Right cardiac atrium (tissue), 5 donors: ENCODE measurements at regions of chr2 and their contacts with region 1.

Region 1: GRCh38 chr2:206800506-206801417 is 35.4 kb downstream of the FASTKD2 start:
- DNase-seq: peak; percentile 57 to 74 (median 57)
- ATAC-seq: peak; percentile 78 to 79
- H3K4me3 ChIP-seq: peak overlapping the region; percentile 15
- H3K27ac ChIP-seq: no peak overlapping the region
- H3K4me1 ChIP-seq: peaks cover 1% of the 10 kb centered on the region
- H3K27me3 ChIP-seq: no peaks in the 10 kb centered on the region

Region 2: GRCh38 chr2:206937555-206937954 is 136.8 kb after region 1 on chr2:
- intact Hi-C with region 1: no loop called
- DNase-seq: no peak
- ATAC-seq: no peak
- H3K4me3 ChIP-seq: no peak overlapping the region
- H3K27ac ChIP-seq: no peak overlapping the region
- H3K4me1 ChIP-seq: no peaks in the 10 kb centered on the region
- H3K27me3 ChIP-seq: no peaks in the 10 kb centered on the region

Region 3: DNA sequence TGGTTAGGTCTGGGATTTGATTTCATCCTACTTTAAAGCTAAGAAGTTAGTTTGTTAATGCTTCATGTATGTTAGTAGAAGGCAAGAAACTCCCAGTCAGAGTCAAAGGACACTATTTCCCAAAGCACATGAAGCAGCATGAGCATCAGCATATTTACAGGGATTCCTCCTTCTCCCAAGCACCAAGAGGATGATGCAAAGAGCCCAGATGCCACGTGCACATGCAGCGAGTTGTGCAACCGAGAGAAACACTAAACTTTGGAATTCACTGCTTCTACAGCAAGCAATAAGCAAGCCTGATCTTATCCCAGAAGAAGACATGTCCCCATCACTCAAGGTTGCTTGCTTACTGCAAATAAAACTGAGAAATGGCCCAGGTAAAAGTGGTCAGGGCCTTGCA is 171.0 kb after region 1 on chr2:
- intact Hi-C with region 1: loop called in 2 of 4 experiments (anchors 10 kb)
- DNase-seq: peak in 1 of 3 donors; percentile 19
- ATAC-seq: no peak
- H3K4me3 ChIP-seq: no peak overlapping the region
- H3K27ac ChIP-seq: no peak overlapping the region
- H3K4me1 ChIP-seq: no peaks in the 10 kb centered on the region
- H3K27me3 ChIP-seq: no peaks in the 10 kb centered on the region

Region 4: GRCh38 chr2:206989306-206989705 is 188.5 kb after region 1 on chr2:
- intact Hi-C with region 1: loop called in 2 of 4 experiments (anchors 5 kb)
- DNase-seq: peak; percentile 28 to 67 (median 47)
- ATAC-seq: peak; percentile 76 to 84
- H3K4me3 ChIP-seq: no peak overlapping the region
- H3K27ac ChIP-seq: no peak overlapping the region
- H3K4me1 ChIP-seq: no peaks in the 10 kb centered on the region
- H3K27me3 ChIP-seq: no peaks in the 10 kb centered on the region

Region 5: DNA sequence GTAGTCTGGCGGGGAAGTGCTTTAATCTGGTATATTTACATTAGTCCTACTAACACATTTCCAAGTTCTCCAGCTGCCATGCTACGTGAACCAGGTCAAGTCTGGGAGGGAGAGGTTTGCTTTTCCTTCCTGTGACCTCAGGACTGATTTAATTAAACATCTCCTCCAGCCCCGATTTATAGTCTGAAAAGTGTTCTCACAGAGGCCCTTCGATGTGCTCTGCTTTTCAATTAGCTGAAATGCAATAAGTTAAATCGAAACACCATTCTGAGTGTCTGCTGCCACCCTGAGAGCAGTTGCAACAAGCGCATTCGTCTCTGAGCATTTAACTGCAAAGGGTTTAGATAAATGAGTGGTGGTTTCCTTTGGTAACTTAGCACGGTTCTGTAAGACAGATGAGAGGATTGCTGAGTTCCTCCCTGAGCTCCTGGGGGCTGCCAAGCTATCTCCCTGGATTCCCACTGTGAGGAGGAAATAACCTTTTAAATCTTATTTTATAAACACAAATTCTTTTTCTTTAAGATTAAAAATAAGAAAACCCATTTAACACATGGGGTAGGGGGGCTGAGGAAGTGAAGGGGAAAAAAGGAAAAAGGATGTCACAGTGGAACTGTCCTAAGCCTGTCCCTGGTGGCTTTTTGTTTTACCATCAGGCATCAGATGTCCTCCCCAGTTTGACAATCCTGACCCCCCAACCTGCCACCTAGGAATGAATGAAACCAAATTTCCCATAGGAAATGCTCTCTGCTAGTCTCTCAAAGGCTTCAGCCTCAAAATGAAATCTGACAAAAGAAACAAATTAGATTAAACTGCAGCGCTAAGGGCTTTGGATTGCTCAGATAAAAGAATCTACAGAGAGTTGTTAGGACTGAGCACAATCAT is 672.5 kb after region 1 on chr2:
- intact Hi-C with region 1: loop called (anchors 2 to 10 kb)
- DNase-seq: peak in 2 of 3 donors; percentile 33 to 50
- ATAC-seq: peak; percentile 83 to 89
- H3K4me3 ChIP-seq: no peak overlapping the region
- H3K27ac ChIP-seq: no peak overlapping the region
- H3K4me1 ChIP-seq: no peaks in the 10 kb centered on the region
- H3K27me3 ChIP-seq: no peaks in the 10 kb centered on the region